Vagina (tissue), 2 donors: ENCODE measurements at regions of chr22 and their contacts with region 1.

Region 1: DNA sequence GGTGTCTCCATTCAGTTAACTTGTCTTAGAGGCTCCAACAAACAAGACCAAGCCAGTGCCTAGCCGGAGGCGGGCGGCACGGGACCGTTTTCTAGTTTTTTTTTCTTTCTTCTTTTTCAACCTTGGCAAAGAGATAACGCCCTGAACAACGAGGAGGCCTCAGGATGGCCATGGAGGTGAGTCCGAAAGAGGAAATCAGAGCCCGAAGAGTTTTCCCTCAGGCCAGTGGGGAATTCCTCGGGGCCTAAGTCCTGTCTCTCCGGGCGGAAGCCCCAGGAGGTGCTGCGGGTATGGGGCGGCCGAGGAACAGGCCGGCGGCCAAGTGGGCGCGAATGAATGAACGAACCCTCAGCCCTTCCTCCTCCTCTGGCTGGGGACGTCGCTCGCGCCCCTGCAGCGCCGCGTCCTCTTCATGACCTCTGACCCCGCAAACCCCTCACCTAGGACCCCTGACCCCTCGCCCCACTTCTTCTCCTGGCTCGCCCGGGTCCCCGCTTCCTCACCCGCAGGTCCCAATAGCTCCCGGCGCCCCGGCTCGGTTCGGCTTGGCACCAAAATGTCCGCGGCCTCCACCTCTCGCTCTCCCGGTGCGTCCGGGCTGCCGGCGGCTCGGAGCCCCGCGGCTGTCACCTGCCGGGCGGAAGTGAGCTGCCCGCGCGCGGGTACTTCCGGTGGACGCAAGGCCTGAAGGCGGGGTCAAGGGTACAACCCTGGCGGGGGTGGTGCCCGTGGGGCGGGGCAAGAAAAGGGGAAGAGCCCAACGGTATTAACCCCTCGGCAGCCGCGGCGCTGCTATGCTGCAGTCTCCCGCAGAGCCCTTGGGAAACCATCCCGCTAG is at the start of gene AP1B1:
- DNase-seq: no peak
- H3K4me3 ChIP-seq: peak within 1 kb of the TSS; percentile 61 to 93
- H3K27ac ChIP-seq: peak within 1 kb of the TSS; percentile 86
- H3K4me1 ChIP-seq: peaks cover 50% of the 10 kb centered on the region
- H3K27me3 ChIP-seq: no peaks in the 10 kb centered on the region
- CTCF ChIP-seq: no peak
- POLR2A ChIP-seq: no peak
- total RNA-seq, gene AP1B1: 60.9 TPM

Region 2: DNA sequence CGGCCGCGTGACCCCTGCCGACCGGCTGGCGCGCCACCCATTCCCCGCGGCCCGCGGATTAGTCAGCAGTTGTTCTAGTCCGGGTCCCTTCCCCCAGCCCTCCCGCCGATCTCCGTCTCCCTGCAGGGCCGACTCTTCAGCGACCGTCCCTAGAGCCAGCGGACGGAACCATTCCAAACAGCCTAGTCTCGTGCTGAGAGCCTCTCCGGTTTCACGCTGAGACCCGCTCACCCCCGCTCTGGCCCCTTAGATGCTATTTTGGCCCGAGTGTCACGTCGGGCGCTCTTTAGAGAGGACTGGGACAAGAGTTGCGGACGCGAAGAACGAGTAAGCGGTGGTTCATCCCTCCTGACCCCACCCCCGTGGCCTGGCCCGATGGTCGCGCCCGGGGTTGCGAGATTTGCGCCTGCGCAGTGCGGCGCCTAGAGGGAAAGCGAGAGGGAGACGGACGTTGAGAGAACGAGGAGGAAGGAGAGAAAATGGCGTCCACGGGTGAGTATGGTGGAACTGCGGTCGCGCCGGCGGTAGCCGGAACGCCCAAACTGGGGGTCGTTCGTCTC is 120.2 kb before region 1 on chr22 and contains the starts of genes EWSR1 and RHBDD3:
- intact Hi-C with region 1: no loop called
- DNase-seq: peak in 1 of 2 donors; percentile 95
- H3K4me3 ChIP-seq: peak within 1 kb of the TSS; percentile 86 to 95
- H3K27ac ChIP-seq: peak within 1 kb of the TSS; percentile 99
- H3K4me1 ChIP-seq: peaks cover 61% of the 10 kb centered on the region
- H3K27me3 ChIP-seq: no peaks in the 10 kb centered on the region
- CTCF ChIP-seq: peak in 1 of 3 experiments; percentile 14
- POLR2A ChIP-seq: peak in 1 of 2 donors; percentile 91
- total RNA-seq, gene EWSR1: 164 TPM
- total RNA-seq, gene RHBDD3: 29.7 TPM

Region 3: GRCh38 chr22:29310863-29311339 is 77.2 kb before region 1 on chr22:
- intact Hi-C with region 1: loop called (anchors 10 kb)
- DNase-seq: peak in 1 of 2 donors; percentile 96
- H3K4me3 ChIP-seq: peak overlapping the region; percentile 16 to 25
- H3K27ac ChIP-seq: peak overlapping the region; percentile 67
- H3K4me1 ChIP-seq: peaks cover 75% of the 10 kb centered on the region
- H3K27me3 ChIP-seq: peaks cover 4% of the 10 kb centered on the region
- CTCF ChIP-seq: no peak
- POLR2A ChIP-seq: no peak

Region 4: DNA sequence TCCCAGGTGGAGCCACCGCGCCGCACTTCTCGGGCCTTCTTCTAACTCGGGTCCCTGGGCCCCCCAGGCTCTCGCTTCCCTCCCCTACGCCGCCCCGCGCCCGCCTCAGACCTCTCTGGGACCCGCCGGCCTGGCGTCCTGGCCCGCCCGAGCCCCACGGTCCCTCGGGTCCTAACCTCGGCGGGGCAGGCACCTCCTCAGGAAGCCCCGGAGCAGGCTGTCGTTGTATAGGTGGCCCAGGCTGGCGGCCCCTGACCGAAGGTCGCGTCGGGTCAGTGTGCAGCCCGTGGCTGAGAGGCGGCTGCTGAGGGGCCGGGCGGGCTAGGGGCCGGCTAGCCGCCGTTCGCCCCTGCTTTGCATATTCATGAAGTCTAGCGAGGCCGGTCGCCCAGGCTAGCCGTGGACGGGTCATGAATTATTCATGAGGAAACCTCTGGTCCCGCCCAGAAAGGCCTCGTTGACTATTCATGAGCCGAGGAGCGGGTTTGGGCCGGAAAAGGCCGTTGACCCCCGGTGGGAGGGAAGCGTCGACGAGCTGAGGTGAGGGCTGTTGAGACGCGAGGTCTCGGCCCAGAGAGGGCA is 691.9 kb after region 1 on chr22 and contains the start of gene HORMAD2:
- intact Hi-C with region 1: no loop called
- DNase-seq: no peak
- H3K4me3 ChIP-seq: no peak within 1 kb of the TSS
- H3K27ac ChIP-seq: no peak within 1 kb of the TSS
- H3K4me1 ChIP-seq: no peaks in the 10 kb centered on the region
- H3K27me3 ChIP-seq: no peaks in the 10 kb centered on the region
- CTCF ChIP-seq: no peak
- POLR2A ChIP-seq: no peak
- total RNA-seq, gene HORMAD2: not detected